ENCODE measurements at regions of chr6 and their contacts with region 1.

Region 1: GRCh38 chr6:107982486-107982885 is 24.5 kb upstream of the SEC63 start:
- DNase-seq: no peak
- ATAC-seq: no peak
- H3K4me3 ChIP-seq: no peak overlapping the region
- H3K27ac ChIP-seq: no peak overlapping the region
- H3K4me1 ChIP-seq: no peaks in the 10 kb centered on the region
- H3K27me3 ChIP-seq: peaks cover 0 to 3% of the 10 kb centered on the region in 2 donors

Region 2: GRCh38 chr6:108074359-108075144 is 92.1 kb after region 1 on chr6 and contains the start of gene OSTM1:
- intact Hi-C with region 1: no loop called
- DNase-seq: peak; percentile 94 to 97
- ATAC-seq: peak; percentile 99
- H3K4me3 ChIP-seq: peak within 1 kb of the TSS; percentile 83 to 92
- H3K27ac ChIP-seq: peak within 1 kb of the TSS in 1 of 2 donors; percentile 69
- H3K4me1 ChIP-seq: no peaks in the 10 kb centered on the region
- H3K27me3 ChIP-seq: no peaks in the 10 kb centered on the region
- total RNA-seq, gene OSTM1: 45.0 to 68.3 TPM

Region 3: DNA sequence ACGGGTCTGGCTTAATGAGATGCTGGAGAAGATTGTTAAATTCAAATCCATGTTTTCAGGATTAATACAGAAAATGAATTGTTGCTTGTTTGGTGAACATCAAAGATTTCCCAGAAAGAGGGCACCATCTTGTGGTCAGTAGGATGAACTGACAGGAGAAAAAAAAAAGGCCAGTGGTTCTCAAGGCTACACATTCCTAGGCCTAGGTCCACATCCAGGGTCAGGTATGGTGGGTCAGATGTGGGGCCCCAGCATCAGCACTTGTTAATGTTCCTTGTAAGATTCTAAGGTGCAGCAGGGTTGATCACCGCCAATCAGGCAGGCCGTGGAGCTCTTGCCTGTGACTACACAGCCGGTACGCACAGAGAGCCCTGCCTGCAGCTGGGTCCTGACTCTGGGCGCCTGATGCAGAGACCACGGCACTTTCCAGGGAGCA is 544.3 kb after region 1 on chr6:
- intact Hi-C with region 1: loop called in 1 of 2 experiments (anchors 5 kb)
- DNase-seq: no peak
- ATAC-seq: peak; percentile 75
- H3K4me3 ChIP-seq: no peak overlapping the region
- H3K27ac ChIP-seq: no peak overlapping the region
- H3K4me1 ChIP-seq: no peaks in the 10 kb centered on the region
- H3K27me3 ChIP-seq: no peaks in the 10 kb centered on the region